ENCODE measurements at regions of chr12 and their contacts with region 1.

Region 1: DNA sequence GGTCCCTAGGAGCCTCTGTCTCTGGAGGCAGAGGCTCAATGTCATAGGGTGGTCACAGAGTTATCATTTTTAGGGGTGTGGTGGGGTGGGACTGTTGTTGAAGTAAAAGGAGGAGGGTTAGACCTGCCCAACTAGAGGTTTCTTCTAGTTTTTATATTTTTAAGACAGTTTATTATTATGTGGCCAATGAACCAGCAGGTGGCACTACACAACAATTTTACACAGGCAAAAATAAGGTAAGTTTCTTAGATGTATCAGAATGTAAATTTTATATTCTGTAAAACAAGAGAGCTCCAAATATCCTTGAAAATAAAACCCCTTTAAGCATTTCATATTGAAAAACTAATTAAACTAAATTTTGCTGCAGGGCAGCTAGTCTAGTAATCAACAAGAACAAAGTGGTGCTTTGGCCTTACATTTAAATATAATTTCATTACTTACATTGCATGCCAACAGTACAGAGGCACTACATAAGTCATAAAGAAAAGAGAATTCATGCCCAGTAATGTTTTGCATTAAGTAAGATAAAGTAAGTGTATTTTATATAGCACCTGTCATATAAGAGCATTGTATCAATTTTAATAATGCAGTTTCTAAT is 22.2 kb upstream of the OVCH1 start:
- DNase-seq: peak; percentile 42
- ATAC-seq: peak; percentile 60; the same call in 1 of the 2 replicates
- H3K4me3 ChIP-seq: no peak overlapping the region
- H3K27ac ChIP-seq: no peak overlapping the region
- H3K4me1 ChIP-seq: no peaks in the 10 kb centered on the region
- H3K27me3 ChIP-seq: no peaks in the 10 kb centered on the region; the same call in 1 of the 2 replicates
- CTCF ChIP-seq: peak; percentile 73

Region 2: GRCh38 chr12:29309320-29309902 is 210.3 kb before region 1 on chr12:
- CTCF ChIA-PET with region 1: no interaction called
- POLR2A ChIA-PET with region 1: no interaction called
- in situ Hi-C with region 1: no loop called
- intact Hi-C with region 1: loop called (anchors 5 kb)
- DNase-seq: no peak
- ATAC-seq: no peak
- H3K4me3 ChIP-seq: no peak overlapping the region
- H3K27ac ChIP-seq: no peak overlapping the region
- H3K4me1 ChIP-seq: no peaks in the 10 kb centered on the region
- H3K27me3 ChIP-seq: no peaks in the 10 kb centered on the region
- CTCF ChIP-seq: peak; percentile 57

Region 3: DNA sequence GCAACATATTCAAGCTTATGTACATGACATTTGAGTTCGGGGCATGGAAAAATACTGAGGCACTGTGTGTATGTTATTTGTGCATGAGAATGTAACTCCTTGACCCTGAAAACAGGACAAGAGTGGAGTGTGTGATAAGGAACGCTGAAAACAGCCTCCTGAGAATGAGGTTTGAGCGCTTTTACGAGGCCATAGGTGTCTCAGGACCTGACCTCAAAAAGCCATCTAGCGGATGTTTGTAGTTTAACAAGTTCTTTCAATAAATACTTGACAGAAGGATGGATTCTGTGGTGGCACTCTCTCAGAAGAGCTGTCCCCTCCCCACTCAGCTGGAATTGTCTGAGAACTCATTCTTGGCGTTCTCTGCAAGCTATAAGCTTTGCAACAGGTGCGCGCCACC is 614.5 kb after region 1 on chr12:
- CTCF ChIA-PET with region 1: no interaction called
- POLR2A ChIA-PET with region 1: no interaction called
- in situ Hi-C with region 1: no loop called
- intact Hi-C with region 1: loop called (anchors 5 kb)
- DNase-seq: peak; percentile 7
- ATAC-seq: peak; percentile 78
- H3K4me3 ChIP-seq: no peak overlapping the region
- H3K27ac ChIP-seq: no peak overlapping the region
- H3K4me1 ChIP-seq: no peaks in the 10 kb centered on the region
- H3K27me3 ChIP-seq: no peaks in the 10 kb centered on the region
- CTCF ChIP-seq: peak; percentile 71

Region 4: GRCh38 chr12:30515351-30515750 is 995.7 kb after region 1 on chr12:
- CTCF ChIA-PET with region 1: no interaction called
- POLR2A ChIA-PET with region 1: no interaction called
- in situ Hi-C with region 1: no loop called
- intact Hi-C with region 1: loop called (anchors 5 kb)
- DNase-seq: no peak
- ATAC-seq: no peak
- H3K4me3 ChIP-seq: no peak overlapping the region
- H3K27ac ChIP-seq: no peak overlapping the region
- H3K4me1 ChIP-seq: no peaks in the 10 kb centered on the region
- H3K27me3 ChIP-seq: peaks cover 4% of the 10 kb centered on the region; the same call in 1 of the 2 replicates
- CTCF ChIP-seq: peak; percentile 53; the same call in 1 of the 2 replicates

Region 5: DNA sequence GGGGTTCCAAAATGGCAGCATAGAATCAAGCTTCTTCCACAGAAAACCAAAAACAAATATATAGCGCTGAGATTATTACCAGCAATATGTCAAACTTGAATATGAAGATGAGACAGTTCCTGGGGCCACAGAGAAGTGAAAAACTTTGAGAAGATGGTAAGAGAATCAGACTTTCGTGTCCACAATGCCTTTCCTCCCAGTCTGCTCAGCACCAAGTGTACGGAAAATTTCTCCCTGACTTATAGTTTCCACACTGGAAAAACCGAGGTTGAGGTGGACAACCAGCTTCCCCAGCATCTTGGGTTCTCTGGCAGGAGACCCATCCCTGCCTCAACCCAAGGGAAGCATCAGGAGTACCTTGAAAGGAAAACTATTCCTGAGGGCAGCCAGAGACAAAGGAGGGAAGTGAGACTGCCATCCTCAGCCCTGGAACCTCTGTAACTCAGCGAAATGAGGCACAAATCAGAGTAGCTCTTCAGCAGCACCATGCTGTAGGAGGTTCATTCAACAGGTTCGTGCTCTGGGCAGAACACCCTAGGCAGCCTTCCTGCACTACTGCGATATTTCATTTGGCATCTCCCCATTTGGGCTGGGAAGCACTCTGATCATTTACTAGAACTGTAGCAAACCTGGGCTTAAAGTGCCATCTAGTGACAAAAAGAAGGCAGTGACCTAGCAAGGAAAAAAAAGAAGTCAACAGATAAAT is 1287.5 kb after region 1 on chr12:
- CTCF ChIA-PET with region 1: no interaction called
- POLR2A ChIA-PET with region 1: no interaction called
- in situ Hi-C with region 1: no loop called
- intact Hi-C with region 1: loop called (anchors 2 kb)
- DNase-seq: peak; percentile 78
- ATAC-seq: peak; percentile 97
- H3K4me3 ChIP-seq: peak overlapping the region in 1 of 2 experiments; percentile 29; a peak in 2 of 4 replicates
- H3K27ac ChIP-seq: peak overlapping the region; percentile 39
- H3K4me1 ChIP-seq: 0 out of 2 replicates have a peak, but pooled peaks cover 3% of the 10 kb centered on the region
- H3K27me3 ChIP-seq: no peaks in the 10 kb centered on the region
- CTCF ChIP-seq: peak; percentile 88